Heart right ventricle (tissue), 16 donors: ENCODE measurements at regions of chr13 and their contacts with region 1.

Region 1: GRCh38 chr13:102394158-102395053 is 7.4 kb downstream of the FGF14 start:
- DNase-seq: peak; percentile 95 to 97
- ATAC-seq: peak; percentile 96 to 99 (median 98)
- H3K4me3 ChIP-seq: peak overlapping the region; percentile 58 to 93 (median 86)
- H3K27ac ChIP-seq: peak overlapping the region; percentile 44 to 89 (median 83)
- H3K4me1 ChIP-seq: peaks cover 0 to 20% (median 13%) of the 10 kb centered on the region in 9 donors
- H3K27me3 ChIP-seq: peaks cover 0 to 12% (median 0%) of the 10 kb centered on the region in 7 donors
- CTCF ChIP-seq: peak in 6 of 9 donors; percentile 8 to 54 (median 36)

Region 2: DNA sequence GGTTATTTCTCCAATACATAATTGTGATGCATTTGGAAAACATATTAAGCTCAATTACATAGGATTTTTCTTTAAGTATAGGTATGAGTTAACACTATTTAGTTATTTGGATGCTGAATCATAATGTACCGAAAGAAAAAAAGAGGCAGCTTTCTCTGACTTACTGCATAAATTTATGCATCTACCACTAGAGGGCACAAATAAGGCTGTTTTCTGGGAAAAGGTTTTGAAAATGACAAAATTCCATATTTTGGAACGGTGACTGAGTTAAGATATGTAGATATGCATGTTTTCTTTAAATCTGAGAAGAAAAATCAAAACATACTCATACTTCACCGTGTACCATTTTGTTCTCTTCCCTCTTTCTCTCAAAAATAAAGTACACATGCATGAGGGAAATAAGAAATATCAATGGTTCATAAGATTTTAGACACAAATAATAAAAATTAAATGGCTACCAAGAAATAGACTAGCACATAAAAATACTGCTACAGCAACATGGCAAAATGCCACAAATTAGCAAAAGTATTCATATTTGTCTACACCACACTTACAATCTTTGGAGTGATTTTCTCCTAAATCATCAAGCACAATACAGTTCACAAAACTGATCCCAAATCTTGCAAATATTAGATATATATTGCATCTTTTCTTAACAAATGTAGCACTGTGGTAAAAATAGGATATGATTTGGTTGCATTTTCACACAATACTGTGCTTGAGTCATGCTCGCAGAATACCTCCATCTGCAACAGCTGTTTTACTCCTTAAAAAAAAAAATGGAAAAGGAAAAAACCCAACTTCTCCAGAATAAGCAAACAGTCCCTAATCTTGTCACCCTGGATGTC is 252.6 kb before region 1 on chr13:
- intact Hi-C with region 1: loop called in 1 of 10 experiments (anchors 5 kb)
- DNase-seq: no peak
- ATAC-seq: peak in 3 of 8 donors; percentile 28 to 52 (median 38)
- H3K4me3 ChIP-seq: no peak overlapping the region
- H3K27ac ChIP-seq: peak overlapping the region in 2 of 10 donors; percentile 4 to 9
- H3K4me1 ChIP-seq: peaks cover 0 to 18% (median 0%) of the 10 kb centered on the region in 9 donors
- H3K27me3 ChIP-seq: no peaks in the 10 kb centered on the region
- CTCF ChIP-seq: peak; percentile 45 to 78 (median 65)

Region 3: DNA sequence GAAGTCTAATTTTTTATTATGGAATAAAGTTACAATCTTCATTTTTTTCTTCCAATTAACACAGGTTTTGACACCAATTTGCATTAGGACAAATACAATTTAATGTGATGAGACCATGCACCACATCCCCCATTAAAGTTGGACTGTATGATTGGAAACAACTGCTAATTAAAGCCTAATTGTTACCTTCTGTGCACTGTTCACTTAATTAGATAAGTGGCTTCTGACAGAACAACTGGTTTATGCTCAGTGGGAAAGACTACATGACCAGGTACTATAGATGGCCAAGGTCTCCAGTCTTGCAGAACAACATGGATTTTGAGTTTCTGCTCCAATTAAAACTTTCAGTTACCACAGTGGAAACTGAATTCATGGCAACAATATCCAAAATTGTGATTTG is 190.7 kb before region 1 on chr13:
- intact Hi-C with region 1: loop called in 1 of 10 experiments (anchors 10 kb)
- DNase-seq: no peak
- ATAC-seq: no peak
- H3K4me3 ChIP-seq: no peak overlapping the region
- H3K27ac ChIP-seq: no peak overlapping the region
- H3K4me1 ChIP-seq: no peaks in the 10 kb centered on the region
- H3K27me3 ChIP-seq: no peaks in the 10 kb centered on the region
- CTCF ChIP-seq: no peak

Region 4: GRCh38 chr13:102317593-102317992 is 76.8 kb before region 1 on chr13:
- intact Hi-C with region 1: loop called in 4 of 10 experiments (anchors 5 to 10 kb)
- DNase-seq: peak; percentile 78 to 92
- ATAC-seq: peak; percentile 95 to 97 (median 96)
- H3K4me3 ChIP-seq: no peak overlapping the region
- H3K27ac ChIP-seq: peak overlapping the region in 8 of 10 donors; percentile 31 to 81 (median 71)
- H3K4me1 ChIP-seq: peaks cover 0 to 33% (median 14%) of the 10 kb centered on the region in 9 donors
- H3K27me3 ChIP-seq: no peaks in the 10 kb centered on the region
- CTCF ChIP-seq: no peak

Region 5: GRCh38 chr13:102484329-102484728 is 89.9 kb after region 1 on chr13:
- intact Hi-C with region 1: no loop called
- DNase-seq: no peak
- ATAC-seq: no peak
- H3K4me3 ChIP-seq: no peak overlapping the region
- H3K27ac ChIP-seq: no peak overlapping the region
- H3K4me1 ChIP-seq: no peaks in the 10 kb centered on the region
- H3K27me3 ChIP-seq: no peaks in the 10 kb centered on the region
- CTCF ChIP-seq: peak in 3 of 9 donors; percentile 11 to 19 (median 15)

Region 6: DNA sequence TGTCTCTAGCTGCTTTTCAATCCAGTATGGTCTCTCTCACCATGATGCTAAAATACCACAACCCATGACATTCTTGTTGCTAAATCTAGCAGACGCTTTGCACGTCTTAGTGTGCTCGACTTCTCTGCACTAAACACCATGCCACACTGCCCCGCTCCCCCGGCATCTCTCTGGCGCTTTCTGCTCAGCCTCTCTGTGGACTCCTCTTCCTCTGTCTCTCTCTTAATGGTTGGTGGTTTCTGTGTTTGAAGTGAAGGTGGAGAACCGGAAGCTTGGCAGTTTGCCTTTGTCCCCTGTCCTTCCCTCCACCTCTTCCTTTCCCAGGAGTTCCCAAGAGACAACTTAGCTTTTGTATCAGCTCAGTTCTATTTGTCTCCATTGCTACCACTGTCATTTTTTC is 460.3 kb after region 1 on chr13:
- intact Hi-C with region 1: loop called in 1 of 10 experiments (anchors 10 kb)
- DNase-seq: no peak
- ATAC-seq: no peak
- H3K4me3 ChIP-seq: no peak overlapping the region
- H3K27ac ChIP-seq: peak overlapping the region in 1 of 10 donors; percentile 6
- H3K4me1 ChIP-seq: peaks cover 0 to 19% (median 6%) of the 10 kb centered on the region in 9 donors
- H3K27me3 ChIP-seq: no peaks in the 10 kb centered on the region
- CTCF ChIP-seq: no peak